ENCODE measurements at regions of chr9 and their contacts with region 1.

Region 1: GRCh38 chr9:89602978-89603766 is 1.6 kb upstream of the GADD45G start:
- DNase-seq: peak; percentile 81
- CTCF ChIP-seq: peak; percentile 93

Region 2: GRCh38 chr9:89621697-89622096 is 18.5 kb after region 1 on chr9:
- CTCF ChIA-PET with region 1: interaction called, 27 read pairs
- POLR2A ChIA-PET with region 1: interaction called, 3 read pairs
- DNase-seq: no peak
- CTCF ChIP-seq: no peak

Region 3: GRCh38 chr9:89919169-89919681 is 316.1 kb after region 1 on chr9:
- CTCF ChIA-PET with region 1: interaction called, 23 read pairs
- POLR2A ChIA-PET with region 1: no interaction called
- DNase-seq: peak; percentile 72
- CTCF ChIP-seq: peak; percentile 39

Region 4: DNA sequence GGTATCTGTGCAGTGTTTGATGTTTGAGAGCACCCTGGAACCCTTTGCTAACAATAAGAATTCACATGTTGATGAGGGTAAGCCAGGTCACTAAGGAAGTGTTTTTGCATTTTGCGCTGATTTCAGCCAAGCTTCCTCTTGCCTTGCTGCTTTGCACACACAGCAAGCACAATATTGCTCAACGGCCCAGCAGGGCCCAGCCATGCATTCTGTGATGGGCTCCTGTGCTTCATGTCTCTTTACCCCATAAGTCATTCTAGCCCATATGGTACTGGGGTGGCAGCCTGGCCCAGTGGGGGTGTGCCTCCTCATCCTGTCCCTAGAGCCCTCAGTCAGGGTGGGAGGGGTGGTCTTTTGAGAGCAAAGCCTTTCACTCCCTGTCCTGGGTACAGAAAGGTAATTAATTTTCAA is 482.9 kb after region 1 on chr9:
- CTCF ChIA-PET with region 1: interaction called, 11 read pairs
- POLR2A ChIA-PET with region 1: no interaction called
- DNase-seq: no peak
- CTCF ChIP-seq: no peak

Region 5: GRCh38 chr9:90102292-90102901 is 499.2 kb after region 1 on chr9:
- CTCF ChIA-PET with region 1: interaction called, 298 read pairs
- POLR2A ChIA-PET with region 1: interaction called, 5 read pairs
- DNase-seq: peak; percentile 85
- CTCF ChIP-seq: peak; percentile 70

Measured in GM10248 (cell line).